Activated CD8-positive, alpha-beta memory T cell treated with anti-CD3 and anti-CD28 coated beads, Interleukin-2, amount 10 ng/mL, durations not matched to agents 7 days and 5 days (primary cell): ENCODE measurements at regions of chr1 and their contacts with region 1.

Region 1: DNA sequence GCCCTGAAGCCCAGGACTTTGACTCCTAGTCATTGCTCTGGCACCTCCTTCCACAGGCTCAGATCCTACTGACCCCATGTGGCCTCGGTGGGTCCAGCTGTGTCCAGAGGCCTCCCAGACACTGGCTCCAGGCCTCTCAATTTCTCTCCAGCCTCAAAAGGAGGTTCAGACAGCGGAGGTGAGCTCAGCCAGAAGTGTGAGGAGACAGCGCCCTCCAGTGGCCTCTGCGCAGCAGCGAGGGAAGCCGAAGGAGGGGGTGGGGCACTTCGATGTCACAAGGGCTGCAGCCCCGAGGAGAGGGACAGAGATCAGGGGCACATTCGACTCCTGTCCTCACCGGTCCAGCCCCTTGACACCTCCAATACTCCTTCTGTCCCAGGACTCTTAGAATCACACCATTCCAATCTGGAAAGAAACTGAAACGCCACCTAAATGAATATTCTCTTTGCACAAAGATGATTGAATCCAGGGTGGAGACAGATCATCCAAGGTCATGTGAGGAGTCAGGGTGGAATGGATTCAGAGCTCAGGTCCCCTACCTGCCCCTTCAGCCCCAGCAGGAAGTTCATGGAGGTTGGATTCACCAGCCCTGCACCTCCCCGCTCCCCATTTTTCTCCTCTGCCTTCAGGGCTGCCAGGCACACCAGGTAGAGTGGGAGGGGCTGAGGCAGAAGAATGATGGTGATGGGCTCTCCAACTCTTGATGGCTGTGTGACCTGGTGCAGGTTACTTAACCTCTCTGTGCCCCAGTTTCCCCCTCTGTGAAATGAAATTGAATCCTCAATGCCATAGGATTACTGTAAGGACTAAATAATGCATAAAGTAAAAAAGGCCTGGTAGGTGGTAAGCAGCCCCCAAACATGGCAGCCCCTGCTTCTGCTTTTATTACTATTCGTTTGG is 34.8 kb upstream of the ZBTB40 start:
- DNase-seq: peak; percentile 79
- ATAC-seq: peak; percentile 83
- H3K4me3 Mint-ChIP-seq: no peak overlapping the region
- H3K27ac Mint-ChIP-seq: no peak overlapping the region
- H3K4me1 Mint-ChIP-seq: peaks cover 2% of the 10 kb centered on the region
- H3K27me3 Mint-ChIP-seq: peaks cover 41% of the 10 kb centered on the region

Region 2: DNA sequence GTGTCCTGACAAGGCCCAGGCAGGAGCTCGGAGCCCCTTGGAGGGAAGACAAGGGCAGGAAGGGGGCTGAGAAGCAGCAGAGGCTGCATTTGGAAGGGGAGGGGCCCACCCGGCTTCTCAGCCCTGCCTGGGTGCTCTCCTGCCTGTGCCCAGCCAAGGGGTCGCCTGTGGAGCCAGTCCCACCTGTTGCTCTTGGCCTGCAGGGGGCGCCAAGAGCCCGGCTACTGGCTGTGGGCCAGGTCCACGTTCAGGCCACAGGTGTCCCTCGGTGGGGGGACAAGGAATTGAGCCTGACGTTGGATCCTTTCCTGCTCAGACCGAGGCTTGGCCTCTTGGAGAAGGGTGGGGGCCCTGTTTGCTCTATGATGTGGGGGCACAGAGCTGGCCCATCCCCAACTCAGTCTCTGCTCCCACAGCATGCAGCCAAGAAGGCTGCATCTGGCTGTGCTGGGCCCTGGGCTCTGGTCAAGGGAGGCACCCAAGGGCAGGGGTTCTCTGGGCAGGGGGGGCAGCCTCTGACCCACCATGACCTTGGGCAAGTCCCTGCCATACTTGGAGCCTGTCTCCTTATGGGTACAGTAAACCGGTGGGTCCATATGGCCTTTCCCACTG is 284.8 kb before region 1 on chr1:
- CTCF ChIA-PET with region 1: interaction called, 24 read pairs
- DNase-seq: peak; percentile 62
- ATAC-seq: peak; percentile 69
- H3K4me3 Mint-ChIP-seq: no peak overlapping the region
- H3K27ac Mint-ChIP-seq: no peak overlapping the region
- H3K4me1 Mint-ChIP-seq: no peaks in the 10 kb centered on the region
- H3K27me3 Mint-ChIP-seq: no peaks in the 10 kb centered on the region

Region 3: GRCh38 chr1:22641906-22642636 is 225.3 kb after region 1 on chr1:
- CTCF ChIA-PET with region 1: interaction called, 12 read pairs
- DNase-seq: peak; percentile 71
- ATAC-seq: peak; percentile 83
- H3K4me3 Mint-ChIP-seq: no peak overlapping the region
- H3K27ac Mint-ChIP-seq: no peak overlapping the region
- H3K4me1 Mint-ChIP-seq: no peaks in the 10 kb centered on the region
- H3K27me3 Mint-ChIP-seq: peaks cover 12% of the 10 kb centered on the region